Motor neuron (in vitro differentiated cells): ENCODE measurements at regions of chr17 and their contacts with region 1.

Region 1: GRCh38 chr17:6666077-6666521 is 14.5 kb downstream of the C17orf100 start:
- ATAC-seq: peak; percentile 76 to 99 (median 94)
- H3K4me3 ChIP-seq: no peak overlapping the region
- H3K27ac ChIP-seq: no peak overlapping the region
- H3K4me1 ChIP-seq: no peaks in the 10 kb centered on the region

Region 2: DNA sequence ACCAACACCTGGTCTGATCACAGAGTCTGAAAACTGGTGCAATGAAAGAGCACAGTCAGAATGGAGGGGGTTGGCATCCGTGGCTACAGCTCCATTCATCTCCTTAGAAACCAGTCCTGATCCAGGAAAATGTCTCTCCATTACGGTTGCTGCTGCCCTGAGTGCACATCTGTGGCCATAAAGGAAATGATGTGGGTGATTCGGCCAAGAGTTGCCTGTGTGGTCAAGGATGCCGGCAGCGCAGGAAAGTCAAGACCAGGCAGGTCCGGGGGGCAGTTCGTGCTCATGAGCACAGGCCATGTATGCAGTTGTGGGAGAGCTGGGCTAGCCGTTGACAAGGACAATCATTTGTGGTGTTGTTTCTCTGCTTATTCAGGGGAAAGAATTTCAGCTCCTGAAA is 95.7 kb after region 1 on chr17:
- in situ Hi-C with region 1: loop called in 1 of 9 experiments (anchors 10 kb)
- ATAC-seq: peak in 3 of 8 experiments; percentile 45 to 97 (median 69)
- H3K4me3 ChIP-seq: no peak overlapping the region
- H3K27ac ChIP-seq: no peak overlapping the region
- H3K4me1 ChIP-seq: peaks cover 0 to 8% of the 10 kb centered on the region in 2 donors

Region 3: DNA sequence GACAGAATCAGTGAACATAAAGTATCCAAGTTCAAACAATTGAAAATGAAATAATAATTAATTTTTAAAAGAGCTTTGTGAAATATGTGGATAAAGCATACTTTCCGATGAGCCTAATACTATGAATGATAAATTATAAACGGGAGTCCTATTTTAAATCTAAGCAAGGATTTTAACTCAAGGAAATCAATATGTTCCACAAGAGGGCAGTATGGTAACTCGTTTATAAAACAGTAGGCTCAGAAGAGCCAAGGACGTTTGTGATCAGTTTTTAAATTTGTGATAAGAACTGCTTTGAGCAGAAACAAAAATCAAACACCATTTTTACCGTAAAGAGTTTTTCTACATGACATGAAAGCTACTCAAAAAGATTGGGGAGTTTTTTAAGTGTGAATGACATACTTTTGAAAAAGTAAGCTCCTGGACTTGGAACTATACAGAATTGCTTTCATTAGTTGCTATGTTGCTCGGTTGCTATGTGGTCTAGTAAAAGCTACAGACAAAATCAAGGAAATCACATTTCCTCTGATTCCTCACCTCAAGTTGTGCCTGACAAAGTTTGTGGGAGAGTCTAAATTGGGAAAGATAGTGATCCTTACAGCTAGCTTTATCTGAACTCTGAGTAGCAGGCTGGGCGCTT is 177.3 kb after region 1 on chr17:
- in situ Hi-C with region 1: loop called in 2 of 9 experiments (anchors 10 to 25 kb)
- ATAC-seq: peak in 4 of 8 experiments; percentile 27 to 63 (median 51)
- H3K4me3 ChIP-seq: no peak overlapping the region
- H3K27ac ChIP-seq: no peak overlapping the region
- H3K4me1 ChIP-seq: peaks cover 0 to 3% of the 10 kb centered on the region in 2 donors